Ascending aorta (tissue), 2 donors: ENCODE measurements at regions of chr15 and their contacts with region 1.

Region 1: DNA sequence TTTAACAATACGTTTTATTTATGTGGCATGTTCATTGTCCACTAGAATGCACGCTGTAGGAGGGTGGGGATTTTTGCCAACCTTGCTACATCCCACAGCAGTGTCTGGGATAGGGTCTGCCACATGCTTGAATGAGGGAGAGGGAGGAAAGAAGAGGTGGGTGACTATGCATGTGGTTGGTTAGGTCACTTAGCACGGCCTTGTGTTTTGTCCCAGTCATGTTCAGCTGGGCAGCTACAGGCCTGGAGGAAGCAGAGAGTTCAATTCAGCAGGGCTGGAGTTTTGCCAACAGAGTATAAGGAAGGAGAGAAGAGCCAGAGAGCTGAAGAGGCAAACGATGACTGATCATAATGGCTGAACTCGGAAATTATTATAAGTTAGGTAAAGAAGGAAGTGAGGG is 268.4 kb upstream of the NSMCE3 start:
- DNase-seq: no peak
- H3K4me3 ChIP-seq: no peak overlapping the region
- H3K27ac ChIP-seq: no peak overlapping the region
- H3K4me1 ChIP-seq: peaks cover 0 to 4% of the 10 kb centered on the region in 2 donors
- H3K27me3 ChIP-seq: no peaks in the 10 kb centered on the region
- CTCF ChIP-seq: no peak

Region 2: GRCh38 chr15:29403772-29404171 is 134.3 kb before region 1 on chr15:
- intact Hi-C with region 1: no loop called
- DNase-seq: no peak
- H3K4me3 ChIP-seq: no peak overlapping the region
- H3K27ac ChIP-seq: no peak overlapping the region
- H3K4me1 ChIP-seq: no peaks in the 10 kb centered on the region
- H3K27me3 ChIP-seq: no peaks in the 10 kb centered on the region
- CTCF ChIP-seq: no peak

Region 3: DNA sequence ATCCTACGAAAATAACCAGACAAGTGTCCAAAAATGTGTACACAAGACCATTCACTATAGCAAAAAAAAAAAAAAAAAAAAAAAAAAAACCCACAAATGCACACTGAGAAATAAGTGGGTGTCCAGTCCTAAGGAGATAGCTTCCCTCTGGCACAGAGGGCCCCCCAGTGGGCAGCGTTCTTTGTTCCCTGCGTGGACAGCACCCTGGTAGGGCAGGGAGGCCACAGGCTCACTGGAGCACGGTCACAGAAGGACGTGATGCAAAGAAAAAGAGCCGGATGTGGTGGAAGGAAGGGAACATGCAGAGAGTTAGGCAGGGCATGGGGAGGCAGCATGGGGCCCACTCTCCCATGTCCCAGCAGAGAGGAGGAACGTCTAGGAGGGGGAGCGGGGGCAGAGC is 57.8 kb before region 1 on chr15:
- intact Hi-C with region 1: loop called (anchors 10 kb)
- DNase-seq: no peak
- H3K4me3 ChIP-seq: no peak overlapping the region
- H3K27ac ChIP-seq: no peak overlapping the region
- H3K4me1 ChIP-seq: no peaks in the 10 kb centered on the region
- H3K27me3 ChIP-seq: no peaks in the 10 kb centered on the region
- CTCF ChIP-seq: no peak

Region 4: DNA sequence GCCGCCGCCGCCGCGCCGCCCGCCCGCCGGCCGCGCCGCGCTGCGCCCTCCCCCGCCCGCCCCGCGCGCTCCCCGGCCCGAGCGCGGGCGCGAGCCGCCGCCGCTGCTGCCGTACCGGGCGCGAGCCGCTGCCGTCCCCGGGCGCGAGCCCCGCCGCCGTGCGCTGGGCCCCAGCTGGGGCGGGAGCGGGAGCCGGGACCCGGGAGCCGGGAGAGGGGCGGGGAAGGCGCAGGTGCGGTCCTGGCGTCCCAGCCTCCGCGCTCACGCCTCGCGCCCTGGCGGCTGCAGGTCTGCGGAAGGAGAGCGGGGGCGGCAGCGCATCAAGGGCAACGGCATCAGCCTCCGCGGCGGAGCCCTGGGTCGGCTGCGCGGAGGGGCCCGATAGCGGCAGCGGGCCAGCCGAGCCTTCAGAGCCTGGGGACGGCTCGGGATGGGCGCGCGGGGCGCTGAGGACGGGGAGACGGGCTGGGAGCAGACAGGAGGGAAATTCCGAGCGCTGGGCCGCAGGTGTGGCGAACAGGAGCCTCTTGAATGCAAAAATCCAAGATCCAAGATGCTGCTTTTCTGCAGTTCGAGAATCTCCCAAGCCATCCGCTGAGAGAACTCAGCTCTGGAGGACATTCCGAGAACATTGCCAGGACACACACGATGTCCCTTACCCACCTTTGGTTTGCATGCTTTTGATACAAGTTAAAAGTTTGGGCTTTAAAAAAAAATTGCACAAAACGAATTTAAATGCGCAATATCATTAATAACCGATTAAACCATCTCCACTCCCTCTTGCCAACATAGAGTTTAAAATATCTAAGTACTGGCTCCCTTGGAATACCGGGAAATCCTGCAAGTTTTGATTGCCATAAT is 33.1 kb after region 1 on chr15:
- intact Hi-C with region 1: loop called (anchors 5 kb)
- DNase-seq: no peak
- H3K4me3 ChIP-seq: peak overlapping the region; percentile 61 to 82
- H3K27ac ChIP-seq: no peak overlapping the region
- H3K4me1 ChIP-seq: no peaks in the 10 kb centered on the region
- H3K27me3 ChIP-seq: no peaks in the 10 kb centered on the region
- CTCF ChIP-seq: no peak